Activated CD4-positive, alpha-beta T cell treated with anti-CD3 and anti-CD28 coated beads, Interleukin-2, amount 10 ng/mL, durations not matched to agents 7 days and 5 days (primary cell): ENCODE measurements at regions of chr16 and their contacts with region 1.

Region 1: GRCh38 chr16:30534368-30535105 is at the start of gene ZNF747:
- DNase-seq: peak; percentile 92
- H3K4me3 Mint-ChIP-seq: peak within 1 kb of the TSS; percentile 85
- H3K27ac Mint-ChIP-seq: peak within 1 kb of the TSS; percentile 96
- H3K4me1 Mint-ChIP-seq: peaks cover 43% of the 10 kb centered on the region
- H3K27me3 Mint-ChIP-seq: no peaks in the 10 kb centered on the region
- total RNA-seq, gene ZNF747: 10.4 to 11.8 TPM

Region 2: GRCh38 chr16:30075507-30076275 is 458.8 kb before region 1 on chr16 and contains the start of gene PPP4C:
- CTCF ChIA-PET with region 1: no interaction called
- POLR2A ChIA-PET with region 1: no interaction called
- DNase-seq: peak; percentile 92
- H3K4me3 Mint-ChIP-seq: peak within 1 kb of the TSS; percentile 81
- H3K27ac Mint-ChIP-seq: peak within 1 kb of the TSS; percentile 91
- H3K4me1 Mint-ChIP-seq: peaks cover 43% of the 10 kb centered on the region
- H3K27me3 Mint-ChIP-seq: no peaks in the 10 kb centered on the region
- total RNA-seq, gene PPP4C: 129 to 136 TPM

Region 3: GRCh38 chr16:30546115-30546514 is 11.6 kb after region 1 on chr16:
- CTCF ChIA-PET with region 1: interaction called, 19 read pairs
- POLR2A ChIA-PET with region 1: no interaction called
- DNase-seq: no peak
- H3K4me3 Mint-ChIP-seq: no peak overlapping the region
- H3K27ac Mint-ChIP-seq: no peak overlapping the region
- H3K4me1 Mint-ChIP-seq: peaks cover 17% of the 10 kb centered on the region
- H3K27me3 Mint-ChIP-seq: no peaks in the 10 kb centered on the region

Region 4: GRCh38 chr16:30551781-30552180 is 17.2 kb after region 1 on chr16:
- CTCF ChIA-PET with region 1: interaction called, 19 read pairs
- POLR2A ChIA-PET with region 1: interaction called, 3 read pairs
- DNase-seq: peak; percentile 83
- H3K4me3 Mint-ChIP-seq: peak overlapping the region; percentile 65
- H3K27ac Mint-ChIP-seq: peak overlapping the region; percentile 95
- H3K4me1 Mint-ChIP-seq: peaks cover 55% of the 10 kb centered on the region
- H3K27me3 Mint-ChIP-seq: no peaks in the 10 kb centered on the region

Region 5: DNA sequence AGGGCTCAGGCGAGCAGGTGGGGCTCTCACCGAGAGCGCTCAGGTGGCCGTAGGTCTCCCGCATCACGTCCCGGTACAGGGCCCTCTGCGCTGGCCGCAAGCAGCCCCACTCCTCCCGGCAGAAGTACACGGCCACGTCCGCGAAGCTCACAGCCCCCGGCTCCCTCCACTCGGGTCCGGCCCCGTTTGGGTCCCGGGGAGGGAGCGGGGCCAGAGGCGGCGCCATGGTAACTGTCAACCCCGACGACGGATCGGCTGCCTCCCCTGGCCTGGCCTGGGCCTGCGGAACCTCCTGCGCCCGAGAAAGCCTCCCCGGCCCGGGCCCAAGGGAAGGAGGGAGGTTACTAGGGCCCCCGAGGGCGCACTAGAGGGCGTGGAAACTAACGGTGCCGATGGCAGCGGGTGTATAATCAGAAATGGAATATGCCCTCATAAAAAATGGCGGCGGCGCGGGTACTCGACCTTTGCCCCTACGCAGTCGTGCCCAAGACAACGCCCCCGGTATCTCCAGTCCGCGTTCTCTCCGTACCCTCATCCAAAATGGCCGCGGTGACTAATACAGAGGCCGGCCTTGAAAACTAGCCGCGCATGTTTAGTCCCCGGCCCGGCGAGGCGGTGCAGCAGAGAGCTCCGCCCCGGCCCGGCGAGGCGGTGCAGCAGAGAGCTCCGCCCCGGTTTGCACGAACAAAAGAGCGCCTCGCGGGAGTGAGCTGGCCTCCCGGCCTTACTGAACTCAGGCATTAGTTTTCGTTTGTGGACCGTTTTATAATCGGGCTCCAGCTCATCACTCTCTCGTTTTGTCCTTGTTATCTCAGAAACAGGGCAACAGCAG is 23.6 kb after region 1 on chr16 and contains the start of gene ZNF764:
- CTCF ChIA-PET with region 1: interaction called, 19 read pairs
- POLR2A ChIA-PET with region 1: interaction called, 4 read pairs
- DNase-seq: peak; percentile 98
- H3K4me3 Mint-ChIP-seq: peak within 1 kb of the TSS; percentile 87
- H3K27ac Mint-ChIP-seq: peak within 1 kb of the TSS; percentile 90
- H3K4me1 Mint-ChIP-seq: peaks cover 44% of the 10 kb centered on the region
- H3K27me3 Mint-ChIP-seq: no peaks in the 10 kb centered on the region
- total RNA-seq, gene ZNF764: 17.5 to 18.2 TPM

Region 6: DNA sequence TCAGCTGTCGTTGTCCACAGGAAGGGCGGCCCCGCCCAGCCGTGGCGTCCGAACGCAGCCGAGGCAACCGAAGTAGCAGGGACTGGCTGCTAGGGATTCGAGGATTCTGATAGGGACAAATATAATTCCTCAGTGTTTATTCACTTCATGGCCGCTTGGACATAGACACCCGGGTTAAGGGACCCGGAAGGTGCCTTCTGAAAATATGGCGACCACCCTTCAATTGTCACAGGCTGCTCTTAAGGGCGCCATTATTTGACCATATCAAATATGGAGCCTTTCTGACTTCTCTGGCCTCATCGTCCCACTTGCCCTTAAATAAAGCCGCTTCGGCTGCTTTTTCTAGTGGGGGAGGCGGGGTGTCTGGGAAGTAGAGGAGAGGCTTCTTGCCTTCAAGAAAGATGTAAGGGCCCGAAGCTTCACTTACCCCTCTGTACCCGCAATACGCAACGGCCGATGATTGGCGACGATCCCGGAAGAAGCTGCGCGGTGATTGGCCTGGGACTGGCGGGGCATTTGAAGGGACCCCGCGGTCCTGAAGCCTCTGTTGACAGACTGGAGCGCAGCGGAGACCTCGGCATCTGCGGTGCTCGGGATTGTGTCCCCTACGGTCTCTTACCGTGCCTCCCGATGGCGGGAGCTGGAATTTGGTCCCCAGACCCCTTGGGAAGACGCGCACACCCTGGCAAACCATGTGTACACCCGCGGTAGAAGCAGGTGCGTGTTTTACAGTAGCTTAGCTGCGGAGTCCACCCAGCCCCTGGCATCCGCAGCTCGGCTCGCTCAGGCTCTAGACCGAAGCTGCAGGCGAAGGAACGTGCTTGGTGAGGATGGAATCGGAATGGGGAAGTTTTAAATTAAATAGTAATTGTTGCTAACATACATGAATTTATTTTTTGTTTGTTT is 37.4 kb after region 1 on chr16 and contains the start of gene ZNF688:
- CTCF ChIA-PET with region 1: interaction called, 11 read pairs
- POLR2A ChIA-PET with region 1: interaction called, 7 read pairs
- DNase-seq: peak; percentile 98
- H3K4me3 Mint-ChIP-seq: peak within 1 kb of the TSS; percentile 86
- H3K27ac Mint-ChIP-seq: peak within 1 kb of the TSS; percentile 96
- H3K4me1 Mint-ChIP-seq: peaks cover 49% of the 10 kb centered on the region
- H3K27me3 Mint-ChIP-seq: no peaks in the 10 kb centered on the region
- total RNA-seq, gene ZNF688: 13.3 to 13.8 TPM

Region 7: GRCh38 chr16:30602616-30603277 is 68.2 kb after region 1 on chr16:
- CTCF ChIA-PET with region 1: interaction called, 20 read pairs
- POLR2A ChIA-PET with region 1: no interaction called
- DNase-seq: no peak
- H3K4me3 Mint-ChIP-seq: no peak overlapping the region
- H3K27ac Mint-ChIP-seq: no peak overlapping the region
- H3K4me1 Mint-ChIP-seq: peaks cover 15% of the 10 kb centered on the region
- H3K27me3 Mint-ChIP-seq: no peaks in the 10 kb centered on the region

Region 8: GRCh38 chr16:30615358-30616091 is 81.0 kb after region 1 on chr16:
- CTCF ChIA-PET with region 1: interaction called, 15 read pairs
- POLR2A ChIA-PET with region 1: no interaction called
- DNase-seq: peak; percentile 81
- H3K4me3 Mint-ChIP-seq: no peak overlapping the region
- H3K27ac Mint-ChIP-seq: no peak overlapping the region
- H3K4me1 Mint-ChIP-seq: peaks cover 16% of the 10 kb centered on the region
- H3K27me3 Mint-ChIP-seq: peaks cover 3% of the 10 kb centered on the region